ENCODE measurements at regions of chr22 and their contacts with region 1.

Region 1: DNA sequence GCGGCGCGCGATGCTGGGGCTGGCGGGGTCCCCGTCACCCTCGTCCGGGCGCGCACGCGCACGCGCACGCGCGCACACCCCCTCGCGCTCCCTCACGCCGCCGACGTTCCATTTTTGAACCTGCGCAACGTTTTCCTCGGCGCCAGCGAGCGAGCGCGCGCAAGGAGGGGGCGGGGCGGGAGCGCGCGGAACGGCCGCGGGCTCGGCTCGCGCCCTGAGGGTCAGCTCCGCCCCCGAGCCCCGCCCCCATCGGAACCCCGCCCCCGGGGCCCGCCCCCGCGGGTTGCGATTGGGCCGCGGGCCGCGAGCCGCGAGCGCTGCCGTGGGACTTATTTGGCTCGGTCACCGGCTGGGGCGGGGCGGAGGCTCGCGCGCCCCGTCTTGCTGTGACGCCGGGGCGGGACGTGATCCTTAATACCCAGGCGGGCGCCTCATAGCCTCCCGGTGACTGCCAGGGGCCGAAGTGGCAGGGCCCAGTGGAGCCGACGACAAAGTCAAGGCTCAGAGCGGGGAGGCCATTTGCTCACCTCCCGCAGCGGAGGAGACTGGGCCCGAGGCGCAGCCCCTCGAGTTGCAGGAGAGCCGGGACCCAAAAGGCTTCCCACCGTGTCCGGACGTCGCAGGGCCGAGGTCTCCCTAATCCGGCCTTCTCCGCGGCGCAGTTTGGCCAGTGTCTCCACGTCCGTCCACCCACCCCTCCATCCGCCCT is at the start of gene CBX7:
- DNase-seq: peak; percentile 91 to 98 (median 94)
- ATAC-seq: peak; percentile 93
- H3K4me3 ChIP-seq: peak within 1 kb of the TSS; percentile 95
- H3K4me3 Mint-ChIP-seq: peak within 1 kb of the TSS; percentile 83 to 99 (median 92)
- H3K27ac ChIP-seq: peak within 1 kb of the TSS; percentile 89
- H3K27ac Mint-ChIP-seq: peak within 1 kb of the TSS; percentile 87 to 96 (median 91)
- H3K4me1 ChIP-seq: peaks cover 31 to 46% of the 10 kb centered on the region in 2 donors
- H3K4me1 Mint-ChIP-seq: peaks cover 7 to 41% (median 35%) of the 10 kb centered on the region in 7 donors
- H3K27me3 ChIP-seq: no peaks in the 10 kb centered on the region
- H3K27me3 Mint-ChIP-seq: peaks cover 0 to 41% (median 0%) of the 10 kb centered on the region in 5 donors
- total RNA-seq, gene CBX7: 14.2 to 164 (median 76.9) TPM

Region 2: DNA sequence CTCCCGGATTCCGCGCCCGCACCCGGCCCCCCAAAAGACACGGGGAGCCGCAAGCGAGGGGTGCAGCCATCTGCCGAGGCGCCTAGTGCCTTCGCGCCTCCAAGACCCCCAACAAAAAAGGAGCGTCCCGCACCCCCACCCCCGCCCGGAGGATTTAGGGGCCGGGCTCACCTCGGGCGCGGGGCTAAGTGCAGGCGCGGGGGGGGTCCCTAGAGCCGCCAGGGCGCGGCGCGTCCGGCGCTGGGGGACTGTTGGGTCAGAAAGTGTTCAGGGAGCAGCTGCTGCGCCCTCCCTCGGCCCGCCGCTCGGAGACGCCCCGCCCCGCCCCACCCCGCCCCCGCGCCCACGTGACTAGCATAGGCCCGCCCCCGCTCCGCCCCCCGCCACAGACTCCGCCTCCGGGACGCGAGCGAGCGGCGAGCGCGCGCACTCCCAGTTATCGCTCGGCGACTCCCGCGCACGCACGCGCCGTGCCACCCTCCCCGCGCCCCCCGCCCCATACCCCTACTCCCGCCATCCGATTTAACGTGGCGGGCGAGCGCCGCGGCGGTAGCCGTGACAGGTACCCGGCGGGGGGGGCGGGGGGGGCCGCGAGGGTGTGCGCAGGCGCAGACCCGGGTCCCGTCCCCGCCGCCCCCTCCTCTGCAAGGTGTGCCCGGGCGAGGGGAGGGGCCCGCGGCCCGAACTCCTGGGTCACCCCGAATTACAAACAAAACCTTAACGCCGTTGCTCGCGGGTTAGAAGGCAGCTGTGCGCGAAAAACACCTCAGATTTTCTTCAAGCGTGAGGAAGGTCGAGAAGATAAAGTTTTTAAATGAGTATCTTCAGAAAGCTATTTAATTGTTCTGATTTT is 753.8 kb before region 1 on chr22:
- CTCF ChIA-PET with region 1: no interaction called
- POLR2A ChIA-PET with region 1: interaction called, 3 read pairs
- intact Hi-C with region 1: loop called in 1 of 2 experiments (anchors 5 kb)
- DNase-seq: peak; percentile 74 to 91 (median 82)
- ATAC-seq: peak; percentile 93
- H3K4me3 ChIP-seq: peak overlapping the region; percentile 46
- H3K4me3 Mint-ChIP-seq: peak overlapping the region; percentile 78 to 93 (median 85)
- H3K27ac ChIP-seq: peak overlapping the region; percentile 69
- H3K27ac Mint-ChIP-seq: peak overlapping the region in 8 of 9 donors; percentile 55 to 84 (median 76)
- H3K4me1 ChIP-seq: no peaks in the 10 kb centered on the region
- H3K4me1 Mint-ChIP-seq: peaks cover 6 to 41% (median 33%) of the 10 kb centered on the region in 7 donors
- H3K27me3 ChIP-seq: no peaks in the 10 kb centered on the region
- H3K27me3 Mint-ChIP-seq: peaks cover 0 to 30% (median 0%) of the 10 kb centered on the region in 5 donors

Region 3: DNA sequence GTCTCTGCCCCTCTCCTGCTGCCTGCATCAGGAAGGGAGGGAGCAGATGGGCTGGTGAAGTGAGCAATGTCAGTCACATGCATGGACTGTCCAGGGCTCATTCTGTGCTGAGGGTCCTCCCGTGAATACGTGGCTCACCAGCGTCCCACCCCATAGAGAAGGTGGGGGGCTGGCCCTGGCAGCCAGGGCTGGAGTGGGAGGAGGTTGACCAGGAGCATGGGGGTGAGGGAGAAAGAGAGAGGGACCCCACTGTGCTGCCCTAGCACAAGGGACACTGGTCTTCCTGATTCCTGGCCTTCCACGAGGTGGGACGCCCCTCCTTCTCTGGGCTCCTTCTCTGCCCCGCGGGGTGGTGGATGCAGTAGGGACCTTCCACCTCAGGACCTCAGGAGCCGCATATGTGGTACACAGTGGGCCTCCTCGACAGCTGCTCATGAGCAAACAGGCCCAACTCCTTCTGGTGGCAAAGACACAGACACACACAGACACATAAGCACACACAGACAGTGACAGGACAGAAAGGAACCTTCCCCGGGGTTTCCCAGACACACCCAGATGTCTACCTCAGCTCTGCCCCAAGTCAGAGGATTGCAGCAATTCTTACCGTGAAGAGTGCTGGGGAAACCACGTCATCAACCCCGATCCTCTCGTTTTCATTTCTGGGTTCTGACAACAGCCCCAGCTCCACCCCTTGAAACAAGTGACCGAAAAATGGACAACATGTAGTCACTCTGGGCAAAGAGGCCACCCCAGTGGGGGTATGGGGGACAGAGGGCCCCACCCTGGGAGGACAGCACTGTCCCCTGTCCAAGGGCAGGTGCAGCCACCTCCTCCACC is 198.9 kb before region 1 on chr22:
- CTCF ChIA-PET with region 1: no interaction called
- POLR2A ChIA-PET with region 1: no interaction called
- intact Hi-C with region 1: no loop called
- DNase-seq: peak in 1 of 9 donors; percentile 74
- ATAC-seq: peak; percentile 89
- H3K4me3 ChIP-seq: no peak overlapping the region
- H3K4me3 Mint-ChIP-seq: peak overlapping the region in 1 of 10 donors; percentile 66
- H3K27ac ChIP-seq: no peak overlapping the region
- H3K27ac Mint-ChIP-seq: peak overlapping the region in 1 of 9 donors; percentile 96
- H3K4me1 ChIP-seq: no peaks in the 10 kb centered on the region
- H3K4me1 Mint-ChIP-seq: peaks cover 0 to 48% (median 0%) of the 10 kb centered on the region in 7 donors
- H3K27me3 ChIP-seq: no peaks in the 10 kb centered on the region
- H3K27me3 Mint-ChIP-seq: peaks cover 0 to 9% (median 0%) of the 10 kb centered on the region in 5 donors

Region 4: DNA sequence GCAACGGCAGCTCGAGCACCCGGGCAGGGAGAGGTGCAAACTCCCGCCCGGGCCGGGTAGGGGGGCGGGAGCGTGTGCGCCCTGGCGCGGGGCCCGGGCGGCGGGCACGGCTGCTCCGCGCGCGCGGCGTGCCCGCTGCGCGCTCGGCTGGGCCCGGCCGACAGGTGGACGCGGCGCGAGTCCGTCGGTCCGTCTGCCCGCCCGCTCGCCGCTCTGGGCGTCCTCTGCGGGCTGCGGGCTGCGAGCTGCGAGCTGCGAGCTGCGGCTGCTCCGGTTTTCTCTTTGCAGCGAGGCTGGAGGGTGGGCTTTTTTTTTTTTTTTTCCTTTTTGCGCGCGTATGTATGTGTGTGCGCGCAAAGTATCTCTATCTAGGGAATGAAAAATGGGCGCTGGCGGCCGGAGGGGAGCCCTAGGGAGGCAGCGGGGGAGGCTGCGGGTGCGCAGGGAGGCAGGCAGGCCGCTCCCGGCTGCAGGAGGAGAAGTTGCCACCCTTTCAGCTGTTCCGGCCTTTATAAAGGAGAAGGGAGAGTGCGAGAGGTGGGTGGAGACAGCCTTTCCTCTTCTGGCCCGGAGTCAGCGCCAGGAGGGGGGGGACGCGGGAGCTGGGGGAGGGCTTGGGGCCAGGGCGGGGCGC is 91.9 kb after region 1 on chr22 and contains the start of gene PDGFB:
- CTCF ChIA-PET with region 1: no interaction called
- POLR2A ChIA-PET with region 1: interaction called, 18 read pairs
- intact Hi-C with region 1: loop called in 1 of 2 experiments (anchors 1 kb)
- DNase-seq: no peak
- ATAC-seq: no peak
- H3K4me3 ChIP-seq: peak within 1 kb of the TSS; percentile 47
- H3K4me3 Mint-ChIP-seq: peak within 1 kb of the TSS; percentile 74 to 97 (median 86)
- H3K27ac ChIP-seq: peak within 1 kb of the TSS; percentile 49
- H3K27ac Mint-ChIP-seq: peak within 1 kb of the TSS in 5 of 9 donors; percentile 12 to 81 (median 35)
- H3K4me1 ChIP-seq: peaks cover 28 to 32% of the 10 kb centered on the region in 2 donors
- H3K4me1 Mint-ChIP-seq: peaks cover 32 to 40% (median 39%) of the 10 kb centered on the region in 7 donors
- H3K27me3 ChIP-seq: peaks cover 0 to 4% of the 10 kb centered on the region in 2 donors
- H3K27me3 Mint-ChIP-seq: peaks cover 0 to 74% (median 29%) of the 10 kb centered on the region in 5 donors
- total RNA-seq, gene PDGFB: 0.56 to 9.5 (median 2.3) TPM